Panc1 (cell line): ENCODE measurements at regions of chr3 and their contacts with region 1.

Region 1: DNA sequence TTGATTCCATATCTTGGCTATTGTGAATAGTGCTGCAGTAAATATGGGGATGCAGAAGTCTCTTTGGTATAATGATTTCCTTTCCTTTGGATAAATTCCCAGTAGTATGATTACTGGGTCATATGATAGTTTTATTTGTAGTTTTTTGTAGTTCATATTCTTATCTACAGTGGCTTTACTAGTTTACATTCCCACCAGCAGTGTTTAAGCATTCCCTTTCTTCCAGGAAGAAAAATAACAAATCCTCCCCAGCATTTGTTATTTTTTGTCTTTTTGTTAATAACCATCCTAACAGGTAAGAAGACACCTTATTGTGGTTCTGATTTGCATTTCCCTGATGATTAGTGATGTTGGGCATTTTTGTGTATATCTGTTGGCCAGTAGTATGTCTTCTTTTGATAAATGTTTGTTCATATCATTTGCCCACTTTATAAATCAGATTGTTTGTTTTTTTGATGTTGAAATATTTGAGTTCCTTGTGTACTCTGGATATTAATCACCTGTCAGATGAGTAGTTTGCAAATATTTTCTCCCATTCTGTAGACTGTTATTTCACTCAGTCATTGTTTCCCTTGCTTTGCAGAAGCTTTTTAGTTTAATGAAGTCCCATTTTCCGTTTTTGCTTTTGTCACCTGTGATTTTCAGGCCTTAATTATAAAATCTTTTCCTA is 163.4 kb upstream of the THRB start:
- DNase-seq: no peak
- ATAC-seq: no peak
- H3K4me3 ChIP-seq: no peak overlapping the region
- H3K27ac ChIP-seq: no peak overlapping the region
- H3K4me1 ChIP-seq: no peaks in the 10 kb centered on the region
- H3K27me3 ChIP-seq: no peaks in the 10 kb centered on the region
- CTCF ChIP-seq: no peak

Region 2: DNA sequence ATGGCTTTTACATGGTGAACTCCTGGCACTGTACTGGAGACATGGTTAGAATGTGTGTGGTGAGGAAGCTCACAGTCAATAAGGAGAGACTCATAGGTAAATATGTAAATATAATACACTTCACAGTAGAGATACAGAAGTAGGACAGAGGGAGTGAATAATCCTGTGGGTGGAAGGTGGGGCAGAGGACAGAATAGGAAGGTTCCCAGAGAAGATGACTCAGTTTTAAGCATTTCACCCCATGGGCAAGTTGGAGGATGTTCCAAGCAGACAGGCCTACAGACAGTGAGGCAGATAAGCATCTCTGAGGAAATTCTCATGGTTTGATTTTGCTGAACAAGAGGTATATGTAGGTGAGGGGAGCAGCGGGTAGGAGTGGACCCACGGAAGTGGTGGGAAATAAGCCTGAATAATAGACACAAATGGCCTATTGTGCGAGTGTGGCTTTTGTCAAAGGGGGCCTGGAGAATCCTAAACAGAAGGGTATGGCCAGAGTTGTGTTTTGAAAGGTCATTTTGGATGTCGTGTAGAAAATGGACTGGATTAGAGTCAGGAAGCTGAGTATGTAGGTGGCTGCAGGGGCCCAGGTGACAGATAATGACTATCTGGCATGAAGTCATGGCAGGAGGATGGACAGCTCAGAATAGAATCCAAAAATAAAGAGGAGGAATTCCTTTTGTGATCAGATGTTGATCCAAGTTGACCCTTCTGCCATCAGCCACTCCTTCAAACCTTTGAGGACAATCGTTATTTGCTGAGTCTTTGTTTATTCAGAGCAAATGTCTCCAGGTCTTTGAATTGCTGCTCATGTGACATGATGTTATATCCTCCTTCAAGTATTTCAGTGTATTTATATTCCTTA is 66.1 kb before region 1 on chr3:
- CTCF ChIA-PET with region 1: no interaction called
- POLR2A ChIA-PET with region 1: no interaction called
- in situ Hi-C with region 1: no loop called
- intact Hi-C with region 1: no loop called
- DNase-seq: no peak
- ATAC-seq: no peak
- H3K4me3 ChIP-seq: no peak overlapping the region
- H3K27ac ChIP-seq: no peak overlapping the region
- H3K4me1 ChIP-seq: no peaks in the 10 kb centered on the region
- H3K27me3 ChIP-seq: no peaks in the 10 kb centered on the region; the same call in 1 of the 2 replicates
- CTCF ChIP-seq: no peak

Region 3: GRCh38 chr3:25957026-25957425 is 1299.0 kb after region 1 on chr3:
- CTCF ChIA-PET with region 1: no interaction called
- POLR2A ChIA-PET with region 1: interaction called, 13 read pairs
- in situ Hi-C with region 1: no loop called
- intact Hi-C with region 1: no loop called
- DNase-seq: no peak
- ATAC-seq: no peak
- H3K4me3 ChIP-seq: no peak overlapping the region
- H3K27ac ChIP-seq: no peak overlapping the region
- H3K4me1 ChIP-seq: no peaks in the 10 kb centered on the region
- H3K27me3 ChIP-seq: no peaks in the 10 kb centered on the region
- CTCF ChIP-seq: no peak